CD8-positive, alpha-beta T cell (primary cell): ENCODE measurements at regions of chr1 and their contacts with region 1.

Region 1: GRCh38 chr1:52141513-52142219 is at the start of gene ZFYVE9:
- DNase-seq: peak; percentile 41 to 87 (median 71)
- ATAC-seq: peak; percentile 78
- H3K4me3 ChIP-seq: peak within 1 kb of the TSS; percentile 52 to 66
- H3K4me3 Mint-ChIP-seq: peak within 1 kb of the TSS; percentile 92
- H3K27ac ChIP-seq: peak within 1 kb of the TSS; percentile 33 to 49
- H3K27ac Mint-ChIP-seq: peak within 1 kb of the TSS; percentile 91
- H3K4me1 ChIP-seq: peaks cover 21% of the 10 kb centered on the region
- H3K4me1 Mint-ChIP-seq: peaks cover 41% of the 10 kb centered on the region
- H3K27me3 ChIP-seq: peaks cover 0 to 3% of the 10 kb centered on the region in 2 experiments
- H3K27me3 Mint-ChIP-seq: no peaks in the 10 kb centered on the region
- CTCF ChIP-seq: peak; percentile 59
- total RNA-seq, gene ZFYVE9: 5.9 to 6.3 TPM

Region 2: GRCh38 chr1:52281518-52281917 is 139.9 kb after region 1 on chr1:
- CTCF ChIA-PET with region 1: no interaction called
- POLR2A ChIA-PET with region 1: interaction called, 3 read pairs
- intact Hi-C with region 1: loop called in 1 of 2 experiments (anchors 5 kb)
- DNase-seq: no peak
- ATAC-seq: no peak
- H3K4me3 ChIP-seq: no peak overlapping the region
- H3K4me3 Mint-ChIP-seq: no peak overlapping the region
- H3K27ac ChIP-seq: no peak overlapping the region
- H3K27ac Mint-ChIP-seq: no peak overlapping the region
- H3K4me1 ChIP-seq: no peaks in the 10 kb centered on the region
- H3K4me1 Mint-ChIP-seq: no peaks in the 10 kb centered on the region
- H3K27me3 ChIP-seq: no peaks in the 10 kb centered on the region
- H3K27me3 Mint-ChIP-seq: no peaks in the 10 kb centered on the region
- CTCF ChIP-seq: no peak

Region 3: DNA sequence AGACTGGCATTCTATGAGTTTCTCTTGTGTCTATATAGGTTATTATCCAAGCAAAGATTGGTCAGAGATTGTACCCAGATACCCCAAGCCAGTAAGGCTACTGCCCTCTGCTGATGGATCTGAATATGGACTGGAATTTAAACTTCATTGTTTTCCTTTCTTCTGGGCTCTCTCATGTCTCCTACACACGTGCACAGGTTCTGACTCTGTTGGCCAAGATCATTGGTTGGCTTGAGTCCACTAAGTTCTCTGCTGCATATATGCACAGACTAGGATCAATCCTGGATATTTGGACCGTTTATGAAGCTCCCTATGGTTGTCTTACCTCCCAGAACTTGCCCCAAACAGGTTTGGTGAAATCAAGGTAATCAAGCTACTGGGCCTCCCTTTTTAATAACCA is 154.7 kb after region 1 on chr1:
- CTCF ChIA-PET with region 1: interaction called, 3 read pairs
- POLR2A ChIA-PET with region 1: no interaction called
- intact Hi-C with region 1: loop called (anchors 1 kb)
- DNase-seq: peak in 2 of 9 experiments; percentile 43 to 49
- ATAC-seq: peak; percentile 57
- H3K4me3 ChIP-seq: no peak overlapping the region
- H3K4me3 Mint-ChIP-seq: no peak overlapping the region
- H3K27ac ChIP-seq: no peak overlapping the region
- H3K27ac Mint-ChIP-seq: no peak overlapping the region
- H3K4me1 ChIP-seq: no peaks in the 10 kb centered on the region
- H3K4me1 Mint-ChIP-seq: no peaks in the 10 kb centered on the region
- H3K27me3 ChIP-seq: no peaks in the 10 kb centered on the region
- H3K27me3 Mint-ChIP-seq: no peaks in the 10 kb centered on the region
- CTCF ChIP-seq: peak; percentile 34

Region 4: GRCh38 chr1:52404116-52404986 is 262.7 kb after region 1 on chr1 and contains the starts of genes ORC1 and PRPF38A:
- CTCF ChIA-PET with region 1: no interaction called
- POLR2A ChIA-PET with region 1: no interaction called
- intact Hi-C with region 1: loop called (anchors 10 kb)
- DNase-seq: peak; percentile 94 to 99 (median 98)
- ATAC-seq: peak; percentile 92
- H3K4me3 ChIP-seq: peak within 1 kb of the TSS; percentile 87 to 92
- H3K4me3 Mint-ChIP-seq: peak within 1 kb of the TSS; percentile 99
- H3K27ac ChIP-seq: peak within 1 kb of the TSS; percentile 96
- H3K27ac Mint-ChIP-seq: peak within 1 kb of the TSS; percentile 98
- H3K4me1 ChIP-seq: peaks cover 26% of the 10 kb centered on the region
- H3K4me1 Mint-ChIP-seq: peaks cover 42% of the 10 kb centered on the region
- H3K27me3 ChIP-seq: no peaks in the 10 kb centered on the region
- H3K27me3 Mint-ChIP-seq: no peaks in the 10 kb centered on the region
- CTCF ChIP-seq: no peak
- total RNA-seq, gene ORC1: 1.2 to 1.3 TPM
- total RNA-seq, gene PRPF38A: 52.2 to 62.0 TPM

Region 5: GRCh38 chr1:52748119-52748518 is 606.5 kb after region 1 on chr1:
- CTCF ChIA-PET with region 1: no interaction called
- POLR2A ChIA-PET with region 1: no interaction called
- intact Hi-C with region 1: loop called in 1 of 2 experiments (anchors 10 kb)
- DNase-seq: peak in 2 of 9 experiments; percentile 12 to 24
- ATAC-seq: no peak
- H3K4me3 ChIP-seq: no peak overlapping the region
- H3K4me3 Mint-ChIP-seq: no peak overlapping the region
- H3K27ac ChIP-seq: no peak overlapping the region
- H3K27ac Mint-ChIP-seq: no peak overlapping the region
- H3K4me1 ChIP-seq: no peaks in the 10 kb centered on the region
- H3K4me1 Mint-ChIP-seq: peaks cover 33% of the 10 kb centered on the region
- H3K27me3 ChIP-seq: no peaks in the 10 kb centered on the region
- H3K27me3 Mint-ChIP-seq: no peaks in the 10 kb centered on the region
- CTCF ChIP-seq: no peak